Activated naive CD4-positive, alpha-beta T cell treated with anti-CD3 and anti-CD28 coated beads for 36 hours (primary cell): ENCODE measurements at regions of chr20 and their contacts with region 1.

Region 1: GRCh38 chr20:6008254-6008653 is 45.6 kb downstream of the LRRN4 start:
- DNase-seq: peak; percentile 31
- H3K4me3 Mint-ChIP-seq: no peak overlapping the region
- H3K27ac Mint-ChIP-seq: no peak overlapping the region
- H3K4me1 Mint-ChIP-seq: peaks cover 36% of the 10 kb centered on the region
- H3K27me3 Mint-ChIP-seq: no peaks in the 10 kb centered on the region

Region 2: GRCh38 chr20:5557123-5557522 is 451.1 kb before region 1 on chr20:
- CTCF ChIA-PET with region 1: no interaction called
- intact Hi-C with region 1: loop called (anchors 1 kb)
- DNase-seq: peak; percentile 80
- H3K4me3 Mint-ChIP-seq: no peak overlapping the region
- H3K27ac Mint-ChIP-seq: peak overlapping the region; percentile 67
- H3K4me1 Mint-ChIP-seq: peaks cover 4% of the 10 kb centered on the region
- H3K27me3 Mint-ChIP-seq: no peaks in the 10 kb centered on the region

Region 3: DNA sequence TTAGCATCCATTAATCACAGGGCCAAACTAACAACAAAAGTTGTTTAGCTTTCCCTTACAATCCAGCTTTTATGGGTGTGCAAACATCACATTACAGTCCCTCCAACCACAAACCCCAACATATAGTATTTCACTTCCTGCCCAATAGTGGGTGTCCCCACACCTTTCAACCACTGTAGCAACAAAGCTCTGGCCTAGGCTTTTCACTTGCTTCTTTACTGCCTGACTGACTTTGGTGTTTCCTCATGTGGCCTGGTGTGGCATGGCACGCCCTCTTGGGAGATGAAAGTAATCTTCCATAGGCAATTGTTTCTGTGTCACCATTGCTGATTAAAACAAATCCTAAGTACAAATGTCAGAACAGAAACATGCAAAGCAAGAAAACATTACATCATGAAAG is 11.5 kb before region 1 on chr20:
- CTCF ChIA-PET with region 1: no interaction called
- intact Hi-C with region 1: loop called (anchors 1 kb)
- DNase-seq: peak; percentile 51
- H3K4me3 Mint-ChIP-seq: no peak overlapping the region
- H3K27ac Mint-ChIP-seq: peak overlapping the region; percentile 0
- H3K4me1 Mint-ChIP-seq: peaks cover 12% of the 10 kb centered on the region
- H3K27me3 Mint-ChIP-seq: no peaks in the 10 kb centered on the region